ENCODE measurements at regions of chr20 and their contacts with region 1.

Region 1: GRCh38 chr20:46999801-47000465 is 105.3 kb downstream of the EYA2 start:
- DNase-seq: no peak
- H3K4me3 ChIP-seq: no peak overlapping the region
- H3K27ac ChIP-seq: no peak overlapping the region
- H3K4me1 ChIP-seq: no peaks in the 10 kb centered on the region
- H3K27me3 ChIP-seq: no peaks in the 10 kb centered on the region
- CTCF ChIP-seq: no peak

Region 2: GRCh38 chr20:46767127-46767761 is 232.7 kb before region 1 on chr20:
- intact Hi-C with region 1: loop called (anchors 10 kb)
- DNase-seq: no peak
- H3K4me3 ChIP-seq: no peak overlapping the region
- H3K27ac ChIP-seq: no peak overlapping the region
- H3K4me1 ChIP-seq: peaks cover 0 to 3% (median 0%) of the 10 kb centered on the region in 3 donors
- H3K27me3 ChIP-seq: no peaks in the 10 kb centered on the region
- CTCF ChIP-seq: peak; percentile 55

Region 3: GRCh38 chr20:46923550-46923949 is 76.4 kb before region 1 on chr20:
- intact Hi-C with region 1: no loop called
- DNase-seq: peak in 1 of 5 donors; percentile 28
- H3K4me3 ChIP-seq: no peak overlapping the region
- H3K27ac ChIP-seq: no peak overlapping the region
- H3K4me1 ChIP-seq: peaks cover 0 to 10% (median 0%) of the 10 kb centered on the region in 3 donors
- H3K27me3 ChIP-seq: no peaks in the 10 kb centered on the region
- CTCF ChIP-seq: no peak

Region 4: GRCh38 chr20:47220161-47220582 is 220.2 kb after region 1 on chr20:
- intact Hi-C with region 1: no loop called
- DNase-seq: peak in 1 of 5 donors; percentile 26
- H3K4me3 ChIP-seq: no peak overlapping the region
- H3K27ac ChIP-seq: no peak overlapping the region
- H3K4me1 ChIP-seq: no peaks in the 10 kb centered on the region
- H3K27me3 ChIP-seq: no peaks in the 10 kb centered on the region
- CTCF ChIP-seq: peak; percentile 44